A673 (cell line): ENCODE measurements at regions of chr7 and their contacts with region 1.

Region 1: GRCh38 chr7:78226059-78226719 is 427.6 kb downstream of the PHTF2 start:
- DNase-seq: peak; percentile 76
- H3K4me3 ChIP-seq: no peak overlapping the region
- H3K27ac ChIP-seq: no peak overlapping the region
- H3K4me1 ChIP-seq: peaks cover 5% of the 10 kb centered on the region
- H3K27me3 ChIP-seq: peaks cover 5% of the 10 kb centered on the region
- CTCF ChIP-seq: peak; percentile 83

Region 2: DNA sequence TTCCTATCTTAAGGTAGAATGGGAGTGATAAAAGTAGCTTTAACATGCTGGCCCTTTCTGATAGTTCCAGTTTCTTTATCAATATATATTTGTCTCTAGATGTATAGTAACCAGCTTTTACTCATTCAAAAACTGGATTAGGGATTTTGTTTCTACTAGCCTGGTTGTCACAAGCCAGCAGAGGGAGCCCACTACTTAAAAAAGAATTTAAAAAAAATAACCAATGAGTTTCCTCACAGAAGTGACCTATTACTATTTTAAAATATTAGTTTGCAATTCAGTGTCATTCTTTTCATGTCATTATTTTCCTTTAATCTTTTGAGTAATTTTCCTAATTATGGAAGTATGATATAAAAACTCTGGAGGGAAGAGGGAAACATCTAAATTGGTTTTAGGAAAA is 285.5 kb before region 1 on chr7:
- CTCF ChIA-PET with region 1: no interaction called
- POLR2A ChIA-PET with region 1: no interaction called
- intact Hi-C with region 1: loop called (anchors 5 kb)
- DNase-seq: peak; percentile 68
- H3K4me3 ChIP-seq: no peak overlapping the region
- H3K27ac ChIP-seq: no peak overlapping the region
- H3K4me1 ChIP-seq: no peaks in the 10 kb centered on the region
- H3K27me3 ChIP-seq: no peaks in the 10 kb centered on the region
- CTCF ChIP-seq: peak; percentile 78

Region 3: GRCh38 chr7:78134256-78134655 is 91.9 kb before region 1 on chr7:
- CTCF ChIA-PET with region 1: interaction called, 7 read pairs
- POLR2A ChIA-PET with region 1: no interaction called
- intact Hi-C with region 1: loop called (anchors 1 kb)
- DNase-seq: peak; percentile 68
- H3K4me3 ChIP-seq: no peak overlapping the region
- H3K27ac ChIP-seq: no peak overlapping the region
- H3K4me1 ChIP-seq: peaks cover 1% of the 10 kb centered on the region
- H3K27me3 ChIP-seq: no peaks in the 10 kb centered on the region
- CTCF ChIP-seq: peak; percentile 68

Region 4: DNA sequence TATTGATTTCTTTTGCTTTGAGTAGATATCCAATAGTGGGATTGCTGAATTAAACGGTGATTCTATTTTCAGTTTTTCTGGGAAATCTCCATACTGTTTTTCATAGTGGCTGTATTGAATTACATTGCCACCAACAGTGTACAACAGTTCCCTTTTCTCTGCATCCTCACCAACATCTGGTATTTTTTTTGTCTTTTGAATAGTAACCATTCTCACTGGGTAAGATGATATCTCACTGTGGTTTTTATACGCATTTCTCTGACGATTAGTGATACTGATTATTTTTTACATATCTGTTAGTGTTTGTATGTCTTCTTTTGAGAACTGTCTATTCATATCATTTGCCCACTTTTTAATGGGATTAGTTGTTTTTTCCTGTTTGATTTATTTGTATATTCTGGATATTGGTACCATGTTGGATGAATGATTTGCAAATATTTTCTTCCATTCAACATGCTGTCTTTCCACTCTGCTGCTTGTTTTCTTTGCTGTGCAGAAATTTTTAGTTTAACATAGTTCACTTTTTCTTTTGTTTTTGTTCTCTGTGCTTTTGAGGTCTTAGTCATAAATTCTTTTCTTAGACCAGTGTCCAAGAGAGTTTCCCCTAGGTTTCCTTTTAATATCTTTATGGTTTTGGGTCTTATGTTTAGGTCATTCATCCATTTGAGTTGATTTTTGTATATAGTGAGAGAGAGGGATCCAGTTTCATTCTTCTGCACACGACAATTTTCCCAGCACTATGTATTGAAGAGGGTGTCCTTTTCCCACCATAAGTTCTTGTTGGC is 157.1 kb after region 1 on chr7:
- CTCF ChIA-PET with region 1: no interaction called
- POLR2A ChIA-PET with region 1: no interaction called
- intact Hi-C with region 1: loop called (anchors 10 kb)
- DNase-seq: no peak
- H3K4me3 ChIP-seq: no peak overlapping the region
- H3K27ac ChIP-seq: no peak overlapping the region
- H3K4me1 ChIP-seq: no peaks in the 10 kb centered on the region
- H3K27me3 ChIP-seq: peaks cover 23% of the 10 kb centered on the region
- CTCF ChIP-seq: no peak